Left colon (tissue), 2 donors: ENCODE measurements at regions of chr7 and their contacts with region 1.

Region 1: DNA sequence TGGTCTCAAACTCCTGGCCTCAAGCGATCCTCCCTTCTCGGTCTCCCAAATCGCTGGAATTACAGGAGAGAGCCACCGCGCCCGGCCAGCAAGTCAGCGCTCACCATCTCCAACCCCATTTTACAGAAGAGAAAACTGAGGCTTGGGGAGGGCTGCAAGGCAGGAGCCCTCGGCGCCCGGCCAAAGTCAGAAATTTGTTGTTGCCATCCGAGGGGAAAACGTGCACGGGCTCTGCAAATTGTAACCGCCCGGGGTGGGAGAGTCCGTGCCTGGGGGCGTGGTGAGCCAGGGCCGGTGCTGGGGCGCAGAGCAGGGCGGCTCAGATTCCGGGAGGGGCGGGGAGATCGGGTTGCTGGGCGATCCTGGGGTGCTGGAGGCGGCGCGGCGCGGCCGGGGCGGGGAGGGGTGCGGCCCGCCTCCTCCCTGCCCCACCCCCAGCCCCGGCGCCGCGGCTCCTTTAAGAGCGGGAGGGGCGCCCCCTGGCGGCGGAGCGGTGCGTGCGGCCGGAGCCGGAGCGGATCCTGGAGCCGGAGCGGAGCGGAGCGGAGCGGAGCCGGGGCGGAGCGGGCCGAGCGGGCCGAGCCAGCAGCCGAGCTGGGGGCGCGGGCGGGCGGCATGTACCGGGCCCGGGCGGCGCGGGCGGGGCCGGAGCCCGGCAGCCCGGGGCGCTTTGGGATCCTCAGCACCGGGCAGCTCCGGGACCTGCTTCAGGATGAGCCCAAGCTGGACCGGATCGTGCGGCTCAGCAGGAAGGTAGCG is at the start of gene VPS37D:
- DNase-seq: peak; percentile 91 to 96
- ATAC-seq: peak; percentile 88
- total RNA-seq, gene VPS37D: 0.70 to 0.78 TPM

Region 2: GRCh38 chr7:73612598-73613269 is 54.8 kb before region 1 on chr7:
- intact Hi-C with region 1: loop called in 1 of 2 experiments (anchors 10 kb)
- DNase-seq: peak; percentile 81 to 89
- ATAC-seq: peak; percentile 95

Region 3: DNA sequence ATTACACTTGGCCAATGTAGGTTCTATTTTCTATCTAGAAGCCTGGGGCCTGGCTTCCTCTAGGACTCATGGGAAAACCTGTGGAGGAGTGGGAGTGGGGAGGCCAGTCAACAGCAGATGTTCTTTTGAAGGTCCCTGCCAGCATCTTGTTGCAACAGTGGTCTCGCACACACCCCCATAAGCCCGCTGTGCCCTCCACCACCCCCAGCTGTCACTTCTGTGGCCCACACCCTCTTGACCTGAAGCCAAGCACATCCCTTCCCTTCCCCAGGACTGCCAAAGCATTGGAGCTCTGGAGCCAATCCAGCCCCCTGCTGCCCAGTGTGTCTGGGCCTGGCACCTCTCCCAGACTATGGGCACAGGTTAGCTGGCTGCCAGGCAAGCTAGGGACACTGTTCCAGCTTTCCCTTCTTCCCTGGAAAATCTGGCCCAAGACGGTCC is 53.9 kb after region 1 on chr7:
- intact Hi-C with region 1: loop called in 1 of 2 experiments (anchors 10 kb)
- DNase-seq: peak in 1 of 2 donors; percentile 51
- ATAC-seq: peak; percentile 42

Region 4: DNA sequence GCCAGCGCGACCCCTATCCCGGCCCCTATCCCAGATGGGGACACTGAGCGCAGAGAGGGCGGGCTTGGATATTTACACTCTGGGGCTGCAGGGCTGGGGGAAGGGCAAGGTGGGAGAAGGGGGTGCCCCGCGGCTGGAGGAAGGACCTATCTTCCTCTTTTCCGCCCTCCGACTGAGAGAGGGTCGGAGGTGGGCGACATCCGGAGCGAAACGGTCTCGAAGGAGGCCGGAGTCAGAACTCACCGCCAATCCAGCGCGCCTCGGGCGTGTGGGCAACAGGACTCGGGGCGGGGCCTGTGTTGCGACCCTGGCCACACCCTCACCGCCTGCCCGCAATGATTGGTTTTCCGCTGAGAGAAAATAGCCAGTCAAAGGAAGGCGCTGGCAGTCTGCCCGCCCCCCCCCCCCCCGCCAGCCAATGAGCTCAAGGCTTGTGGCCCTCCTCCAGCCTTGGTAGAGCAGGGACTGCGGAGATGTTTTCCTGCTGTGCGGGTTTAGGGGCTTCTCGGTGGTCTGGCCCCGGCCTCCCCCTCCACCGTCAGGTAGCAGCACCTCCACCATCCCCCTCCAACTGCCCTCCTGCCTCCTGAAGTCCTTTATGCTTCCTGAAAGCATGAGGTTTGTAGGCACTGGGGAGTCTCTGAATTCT is 174.8 kb after region 1 on chr7 and contains the start of gene METTL27:
- intact Hi-C with region 1: no loop called
- DNase-seq: peak; percentile 96
- ATAC-seq: peak; percentile 94
- total RNA-seq, gene METTL27: 3.7 to 3.8 TPM

Region 5: DNA sequence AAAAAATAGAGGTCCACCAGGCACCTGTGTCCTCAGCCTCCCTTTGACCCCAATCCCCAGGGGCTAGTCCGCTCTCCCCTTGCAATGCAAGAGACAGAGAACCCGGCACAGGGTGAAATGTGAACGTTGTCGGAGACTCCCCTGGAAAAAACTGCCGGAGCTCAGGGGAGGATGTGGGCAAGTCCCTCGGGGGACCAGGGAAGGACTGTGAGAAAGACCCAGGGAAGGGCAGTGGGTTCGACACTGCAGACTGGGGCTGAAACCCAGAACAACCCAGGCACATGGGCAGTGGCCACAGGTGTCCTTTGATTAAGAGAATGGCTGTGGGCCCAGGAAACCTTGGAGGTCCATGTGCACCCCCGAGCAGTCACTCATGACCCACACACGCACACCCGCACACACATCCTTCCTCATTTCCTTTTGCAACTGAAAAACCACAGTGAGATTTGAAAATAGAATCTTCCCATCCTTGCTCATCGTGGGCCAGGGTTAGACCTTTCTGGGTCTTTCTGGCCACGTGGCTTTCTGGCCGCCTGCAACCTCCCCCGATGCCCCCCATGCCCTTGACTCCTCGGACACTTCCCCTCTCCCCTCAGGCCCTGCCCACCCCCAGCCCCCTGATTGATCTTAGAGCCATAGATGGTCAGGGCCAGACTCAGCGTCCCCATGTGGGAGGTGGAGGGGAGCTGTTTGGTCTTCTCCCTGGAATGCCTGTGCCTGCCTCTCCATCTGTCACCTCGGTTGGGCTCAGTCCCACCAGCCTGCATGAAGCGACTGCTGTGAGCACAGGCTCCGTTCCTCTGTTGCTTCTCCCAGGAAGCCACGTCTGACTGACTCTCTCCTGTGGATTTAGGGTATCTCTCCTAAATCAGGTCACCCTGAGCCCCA is 550.2 kb after region 1 on chr7:
- intact Hi-C with region 1: no loop called
- DNase-seq: no peak
- ATAC-seq: no peak